ENCODE measurements at regions of chr3 and their contacts with region 1.

Region 1: GRCh38 chr3:122383771-122384697 is at the start of gene FAM162A:
- DNase-seq: peak; percentile 93
- ATAC-seq: peak; percentile 94
- H3K4me3 Mint-ChIP-seq: peak within 1 kb of the TSS; percentile 94
- H3K27ac Mint-ChIP-seq: peak within 1 kb of the TSS; percentile 91
- H3K4me1 Mint-ChIP-seq: peaks cover 38% of the 10 kb centered on the region
- H3K27me3 Mint-ChIP-seq: no peaks in the 10 kb centered on the region
- CTCF ChIP-seq: no peak
- total RNA-seq, gene FAM162A: 28.5 and 33.9 TPM in 2 replicates

Region 2: GRCh38 chr3:122283796-122284445 is 100.1 kb before region 1 on chr3:
- CTCF ChIA-PET with region 1: no interaction called
- POLR2A ChIA-PET with region 1: no interaction called
- intact Hi-C with region 1: no loop called
- DNase-seq: no peak
- ATAC-seq: no peak
- H3K4me3 Mint-ChIP-seq: no peak overlapping the region
- H3K27ac Mint-ChIP-seq: no peak overlapping the region
- H3K4me1 Mint-ChIP-seq: no peaks in the 10 kb centered on the region
- H3K27me3 Mint-ChIP-seq: no peaks in the 10 kb centered on the region
- CTCF ChIP-seq: no peak

Region 3: DNA sequence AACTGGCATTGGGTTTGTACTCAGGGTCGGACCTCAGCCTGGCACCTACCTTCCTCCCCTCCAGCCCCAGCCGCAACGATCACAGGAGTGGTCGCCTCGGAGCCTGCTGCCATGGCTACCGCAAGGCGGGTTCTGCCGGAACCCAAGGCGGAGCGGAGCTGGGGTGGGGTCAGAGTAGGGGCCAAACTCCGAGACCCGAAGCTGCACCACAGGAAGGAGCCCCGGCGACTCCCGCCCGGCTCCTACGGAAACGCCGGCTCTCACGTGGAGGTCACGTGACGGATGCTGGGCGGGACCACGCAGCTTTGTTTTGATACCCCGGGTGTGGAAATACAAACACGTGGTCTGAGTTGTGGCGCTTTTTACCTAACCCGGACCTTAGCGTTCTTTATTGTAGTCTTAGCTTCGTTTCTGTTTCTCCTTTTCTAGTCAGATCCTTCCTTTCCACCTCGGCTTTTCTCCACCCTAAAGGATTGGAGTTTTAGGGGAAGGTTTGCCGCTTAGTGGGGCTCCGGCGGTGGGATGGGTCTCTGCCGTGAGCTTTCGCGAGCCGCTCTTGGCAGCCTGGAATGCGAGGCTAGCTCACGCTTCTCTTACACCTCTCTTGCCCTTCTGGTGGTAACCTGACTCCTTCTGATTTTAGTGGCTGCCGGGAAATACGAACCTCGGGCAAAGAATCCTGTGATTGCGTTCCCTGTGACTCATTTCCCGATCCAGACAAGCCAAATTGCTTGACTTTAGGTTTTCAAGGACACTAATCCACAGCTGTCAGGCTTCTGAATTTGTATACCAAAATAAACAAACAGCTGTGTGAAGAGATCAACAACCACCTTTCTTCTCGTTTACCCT is 409.8 kb after region 1 on chr3 and contains the start of gene HSPBAP1:
- CTCF ChIA-PET with region 1: no interaction called
- POLR2A ChIA-PET with region 1: interaction called, 7 read pairs
- intact Hi-C with region 1: loop called (anchors 2 kb)
- DNase-seq: peak; percentile 91
- ATAC-seq: peak; percentile 67
- H3K4me3 Mint-ChIP-seq: no peak within 1 kb of the TSS
- H3K27ac Mint-ChIP-seq: peak within 1 kb of the TSS; percentile 86
- H3K4me1 Mint-ChIP-seq: peaks cover 30% of the 10 kb centered on the region
- H3K27me3 Mint-ChIP-seq: no peaks in the 10 kb centered on the region
- CTCF ChIP-seq: no peak
- total RNA-seq, gene HSPBAP1: 18.1 and 20.6 TPM in 2 replicates